ENCODE measurements at regions of chr5 and their contacts with region 1.

Region 1: GRCh38 chr5:142748568-142749249 is 21.5 kb upstream of the ARHGAP26 start:
- DNase-seq: peak; percentile 83
- H3K4me3 Mint-ChIP-seq: no peak overlapping the region
- H3K27ac Mint-ChIP-seq: no peak overlapping the region
- H3K4me1 Mint-ChIP-seq: peaks cover 12% of the 10 kb centered on the region
- H3K27me3 Mint-ChIP-seq: peaks cover 5% of the 10 kb centered on the region

Region 2: DNA sequence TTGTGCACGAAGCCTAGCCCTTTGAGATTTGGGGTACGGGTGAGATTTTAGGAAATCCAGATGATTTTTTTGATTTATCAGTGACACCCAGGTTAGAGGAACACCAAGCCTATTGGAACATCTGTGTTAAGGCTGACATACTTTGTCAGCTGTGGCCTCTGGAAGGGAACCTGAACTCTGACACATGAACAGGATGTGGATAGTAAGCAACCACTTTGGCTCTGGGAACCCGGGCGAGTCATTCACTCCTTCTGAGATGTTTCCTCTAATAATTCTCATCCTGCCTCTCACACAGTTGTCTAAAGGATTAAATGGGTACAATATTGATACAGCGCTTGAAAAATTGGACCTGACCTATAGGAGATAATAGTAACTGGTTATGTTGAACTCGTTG is 130.6 kb before region 1 on chr5:
- intact Hi-C with region 1: no loop called
- DNase-seq: peak; percentile 62
- H3K4me3 Mint-ChIP-seq: no peak overlapping the region
- H3K27ac Mint-ChIP-seq: no peak overlapping the region
- H3K4me1 Mint-ChIP-seq: peaks cover 11% of the 10 kb centered on the region
- H3K27me3 Mint-ChIP-seq: peaks cover 14% of the 10 kb centered on the region

Region 3: DNA sequence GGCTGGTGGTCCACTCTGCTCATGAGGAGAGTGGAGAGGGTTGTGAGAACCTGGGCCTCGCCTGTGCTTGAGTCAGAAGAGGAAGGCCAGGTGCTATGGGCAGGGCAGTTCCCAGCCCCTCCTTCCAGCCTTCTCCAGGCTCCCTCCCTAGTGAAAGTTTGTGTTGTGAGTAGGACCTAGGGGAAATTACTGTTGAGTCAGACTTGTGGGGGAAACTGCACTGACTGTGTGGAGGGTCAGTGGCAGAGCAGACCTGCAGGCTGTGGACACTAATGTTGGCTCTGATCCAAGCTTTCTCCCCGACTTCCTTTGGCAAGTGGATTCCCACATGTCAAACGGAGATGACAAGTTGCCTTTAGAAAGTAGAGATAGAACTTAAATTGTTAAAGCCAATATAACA is 124.1 kb after region 1 on chr5:
- intact Hi-C with region 1: loop called (anchors 1 kb)
- DNase-seq: no peak
- H3K4me3 Mint-ChIP-seq: no peak overlapping the region
- H3K27ac Mint-ChIP-seq: no peak overlapping the region
- H3K4me1 Mint-ChIP-seq: peaks cover 3% of the 10 kb centered on the region
- H3K27me3 Mint-ChIP-seq: no peaks in the 10 kb centered on the region

Region 4: DNA sequence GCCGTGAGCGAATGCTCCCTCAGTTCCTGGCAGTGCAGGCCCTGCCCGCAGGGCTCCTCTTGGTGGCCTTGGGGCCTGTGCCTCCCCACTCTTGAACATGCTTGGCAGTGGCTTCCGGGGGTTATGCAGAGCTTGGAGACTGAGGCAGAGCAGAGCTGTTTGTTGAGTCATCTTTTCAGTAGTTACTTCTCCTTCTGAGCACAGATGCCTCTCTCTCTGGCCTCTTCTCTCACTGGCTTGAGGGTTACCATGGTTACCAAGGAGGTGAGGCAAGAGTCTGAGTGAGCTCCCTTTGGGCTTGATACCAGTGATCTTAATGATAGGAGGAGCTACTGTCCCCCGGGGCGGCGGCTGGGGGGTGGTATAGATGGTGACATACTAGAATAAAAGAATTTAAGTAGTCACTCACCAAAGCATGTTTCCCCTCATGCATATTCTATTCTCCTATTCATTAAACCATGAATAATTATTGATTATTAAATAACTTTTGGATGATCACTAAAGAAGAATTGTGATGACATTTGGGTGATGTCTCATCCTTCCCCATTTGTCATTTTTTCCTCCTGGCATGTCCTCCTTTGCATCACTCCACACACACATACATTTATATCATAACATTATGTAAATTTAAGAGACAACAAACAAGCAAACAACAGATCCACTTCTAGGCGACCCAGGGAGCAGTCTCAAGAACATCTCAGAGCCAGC is 132.5 kb after region 1 on chr5:
- intact Hi-C with region 1: loop called (anchors 1 kb)
- DNase-seq: no peak
- H3K4me3 Mint-ChIP-seq: no peak overlapping the region
- H3K27ac Mint-ChIP-seq: no peak overlapping the region
- H3K4me1 Mint-ChIP-seq: peaks cover 2% of the 10 kb centered on the region
- H3K27me3 Mint-ChIP-seq: no peaks in the 10 kb centered on the region